K562 (cell line): ENCODE measurements at regions of chr6 and their contacts with region 1.

Region 1: DNA sequence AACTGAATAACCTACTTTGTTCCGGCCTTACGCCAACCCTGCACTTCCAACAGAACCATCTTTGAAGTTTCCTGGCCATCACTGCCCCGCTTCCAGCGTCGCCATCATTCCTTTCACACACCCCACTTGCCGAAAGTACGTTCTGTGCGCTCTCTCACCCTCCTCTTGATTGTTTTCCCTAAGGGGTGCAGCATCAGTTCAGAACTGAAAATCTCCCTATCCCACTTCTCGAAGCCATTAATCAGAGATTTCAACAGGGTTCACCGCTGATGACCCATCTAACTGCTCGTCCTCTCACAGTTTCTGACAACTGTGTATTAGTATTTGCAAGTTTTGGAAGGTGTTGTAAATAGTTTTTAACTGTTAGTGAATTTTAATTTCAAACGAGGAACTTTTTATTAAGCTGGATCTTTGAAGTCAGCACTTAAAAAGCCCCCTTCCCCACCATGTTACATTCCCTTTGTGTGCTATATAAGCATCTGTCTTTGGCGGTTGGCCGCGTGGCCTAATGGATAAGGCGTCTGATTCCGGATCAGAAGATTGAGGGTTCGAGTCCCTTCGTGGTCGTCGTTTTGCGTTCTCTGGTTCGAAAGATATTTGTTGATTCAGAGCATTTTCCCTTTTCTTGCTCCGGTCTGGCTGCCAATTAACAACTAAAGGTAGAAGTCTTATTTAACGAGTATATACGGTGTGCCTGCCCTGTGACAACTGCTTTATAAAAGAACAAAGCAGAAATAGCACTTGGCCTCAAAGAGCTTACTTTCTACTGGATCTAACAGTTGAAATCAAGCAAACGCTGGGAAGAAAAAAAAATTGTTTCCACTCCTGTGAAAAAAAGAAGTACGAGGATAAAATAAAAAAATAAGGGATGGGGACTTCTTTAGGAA is 42.6 kb downstream of the TRIM27 start:
- DNase-seq: peak; percentile 72 to 93 (median 74)
- ATAC-seq: peak; percentile 67
- H3K4me3 ChIP-seq: peak overlapping the region; percentile 63
- H3K27ac ChIP-seq: peak overlapping the region; percentile 66
- H3K4me1 ChIP-seq: peaks cover 3% of the 10 kb centered on the region in 2 experiments; a peak in 2 of 5 replicates
- H3K27me3 ChIP-seq: no peaks in the 10 kb centered on the region
- CTCF ChIP-seq: peak in 1 of 3 experiments; percentile 4; a peak in 1 of 6 replicates
- EP300 ChIP-seq: peak; percentile 78
- POLR2A ChIP-seq: no peak
- RAD21 ChIP-seq: no peak

Region 2: GRCh38 chr6:28863604-28864320 is 17.4 kb before region 1 on chr6:
- CTCF ChIA-PET with region 1: no interaction called
- POLR2A ChIA-PET with region 1: interaction called, 28 read pairs
- in situ Hi-C with region 1: no loop called
- intact Hi-C with region 1: no loop called
- DNase-seq: peak; percentile 64 to 92 (median 68)
- ATAC-seq: peak; percentile 72
- H3K4me3 ChIP-seq: peak overlapping the region; percentile 64
- H3K27ac ChIP-seq: peak overlapping the region; percentile 79
- H3K4me1 ChIP-seq: peaks cover 14 to 25% of the 10 kb centered on the region in 2 experiments; a peak in 4 of 5 replicates
- H3K27me3 ChIP-seq: no peaks in the 10 kb centered on the region
- CTCF ChIP-seq: 0 out of 6 replicates have a peak, but pooled peaks of 1 of the 3 experiments have one; percentile 61
- EP300 ChIP-seq: peak; percentile 76
- POLR2A ChIP-seq: peak; percentile 54; the same call in 1 of the 2 replicates
- RAD21 ChIP-seq: peak in 1 of 2 experiments; percentile 63; a peak in 3 of 4 replicates